Right ventricle myocardium superior (tissue), 1 donor: ENCODE measurements at regions of chr19 and their contacts with region 1.

Region 1: GRCh38 chr19:16324384-16325160 is at the start of gene KLF2:
- DNase-seq: peak; percentile 97
- ATAC-seq: peak; percentile 90
- total RNA-seq, gene KLF2: 67.6 TPM

Region 2: GRCh38 chr19:16259385-16260159 is 65.0 kb before region 1 on chr19:
- intact Hi-C with region 1: loop called (anchors 5 kb)
- DNase-seq: peak; percentile 57
- ATAC-seq: no peak

Region 3: GRCh38 chr19:16283210-16284061 is 41.1 kb before region 1 on chr19:
- intact Hi-C with region 1: loop called (anchors 5 kb)
- DNase-seq: peak; percentile 88
- ATAC-seq: peak; percentile 87